HEK293T (cell line): ENCODE measurements at regions of chr13 and their contacts with region 1.

Region 1: GRCh38 chr13:29771247-29771646 is 79.2 kb downstream of the UBL3 start:
- DNase-seq: no peak

Region 2: GRCh38 chr13:30114571-30115256 is 343.5 kb after region 1 on chr13:
- CTCF ChIA-PET with region 1: interaction called, 12 read pairs
- POLR2A ChIA-PET with region 1: interaction called, 4 read pairs
- DNase-seq: peak; percentile 88